PC-9 (cell line): ENCODE measurements at regions of chr17 and their contacts with region 1.

Region 1: DNA sequence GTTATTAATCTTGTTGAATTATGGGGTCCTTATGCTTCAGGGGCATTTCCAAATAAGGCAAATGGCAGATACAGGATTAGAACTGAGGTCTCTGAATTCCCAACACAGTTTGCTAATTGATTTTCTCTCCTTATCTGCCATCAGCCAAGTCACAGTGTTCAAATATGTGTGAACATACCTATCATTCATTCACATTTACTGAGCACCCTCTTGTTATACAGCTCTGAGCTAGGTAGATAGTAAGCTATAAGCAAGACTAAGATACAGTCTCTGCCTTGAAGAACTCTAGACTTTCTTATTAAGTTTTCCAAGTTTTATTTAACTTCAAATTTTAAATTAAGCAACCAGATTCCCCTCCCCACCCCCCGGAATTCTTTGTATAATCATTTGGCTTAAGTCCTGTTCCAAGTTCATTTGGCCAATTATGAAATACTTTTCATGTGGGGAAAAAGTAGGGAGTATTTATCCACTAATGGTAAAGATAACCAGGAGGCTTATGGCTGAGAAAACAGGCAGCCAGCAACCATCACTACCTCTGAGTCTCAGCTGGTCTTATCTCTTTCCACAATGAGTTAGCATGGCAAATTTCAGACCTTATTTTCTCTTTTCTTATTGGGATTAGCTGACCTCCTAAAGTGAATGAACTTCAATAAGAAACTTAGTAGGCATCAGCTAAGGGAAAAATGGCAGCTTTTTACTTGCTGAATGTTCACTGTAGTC is 31.4 kb upstream of the CORO6 start:
- DNase-seq: no peak
- H3K4me3 ChIP-seq: no peak overlapping the region
- H3K27ac ChIP-seq: no peak overlapping the region
- H3K4me1 ChIP-seq: no peaks in the 10 kb centered on the region
- H3K27me3 ChIP-seq: no peaks in the 10 kb centered on the region
- CTCF ChIP-seq: no peak

Region 2: GRCh38 chr17:29682054-29682453 is 27.9 kb after region 1 on chr17:
- CTCF ChIA-PET with region 1: interaction called, 10 read pairs
- POLR2A ChIA-PET with region 1: no interaction called
- intact Hi-C with region 1: no loop called
- DNase-seq: no peak
- H3K4me3 ChIP-seq: no peak overlapping the region
- H3K27ac ChIP-seq: no peak overlapping the region
- H3K4me1 ChIP-seq: no peaks in the 10 kb centered on the region
- H3K27me3 ChIP-seq: no peaks in the 10 kb centered on the region
- CTCF ChIP-seq: no peak

Region 3: GRCh38 chr17:29710891-29711418 is 56.8 kb after region 1 on chr17:
- CTCF ChIA-PET with region 1: no interaction called
- POLR2A ChIA-PET with region 1: no interaction called
- intact Hi-C with region 1: no loop called
- DNase-seq: peak; percentile 77 to 96
- H3K4me3 ChIP-seq: peak overlapping the region; percentile 9; the same call in 1 of the 2 replicates
- H3K27ac ChIP-seq: peak overlapping the region; percentile 81
- H3K4me1 ChIP-seq: peaks cover 40% of the 10 kb centered on the region
- H3K27me3 ChIP-seq: no peaks in the 10 kb centered on the region
- CTCF ChIP-seq: no peak; the same call in 1 of the 2 replicates

Region 4: DNA sequence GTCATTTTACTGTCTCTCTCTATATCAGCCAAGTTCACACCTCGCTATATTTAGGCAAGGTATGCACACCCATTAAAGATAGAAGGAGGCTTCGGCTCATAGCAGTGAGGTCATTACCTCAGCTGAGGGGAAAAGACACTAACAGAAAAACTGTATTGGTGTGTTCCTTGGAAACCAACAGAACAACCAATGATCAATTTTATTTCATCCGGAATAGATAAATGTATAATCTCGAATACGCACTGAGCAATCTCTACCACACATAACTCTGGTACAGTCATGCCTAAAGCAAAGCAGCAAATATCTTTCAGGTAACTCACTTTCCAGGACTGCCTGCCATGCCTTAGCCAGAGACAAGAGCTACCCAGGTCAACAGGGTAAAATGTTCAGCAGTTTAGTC is 78.5 kb after region 1 on chr17:
- CTCF ChIA-PET with region 1: no interaction called
- POLR2A ChIA-PET with region 1: interaction called, 23 read pairs
- intact Hi-C with region 1: no loop called
- DNase-seq: peak in 1 of 2 experiments; percentile 85
- H3K4me3 ChIP-seq: no peak overlapping the region
- H3K27ac ChIP-seq: peak overlapping the region; percentile 63
- H3K4me1 ChIP-seq: peaks cover 25% of the 10 kb centered on the region
- H3K27me3 ChIP-seq: no peaks in the 10 kb centered on the region
- CTCF ChIP-seq: no peak